GM10248 (cell line): ENCODE measurements at regions of chr6 and their contacts with region 1.

Region 1: GRCh38 chr6:116100419-116101301 is at the start of gene NT5DC1:
- DNase-seq: peak; percentile 93
- CTCF ChIP-seq: peak; percentile 19

Region 2: GRCh38 chr6:115982453-115982852 is 118.2 kb before region 1 on chr6:
- CTCF ChIA-PET with region 1: no interaction called
- POLR2A ChIA-PET with region 1: no interaction called
- DNase-seq: no peak
- CTCF ChIP-seq: no peak

Region 3: DNA sequence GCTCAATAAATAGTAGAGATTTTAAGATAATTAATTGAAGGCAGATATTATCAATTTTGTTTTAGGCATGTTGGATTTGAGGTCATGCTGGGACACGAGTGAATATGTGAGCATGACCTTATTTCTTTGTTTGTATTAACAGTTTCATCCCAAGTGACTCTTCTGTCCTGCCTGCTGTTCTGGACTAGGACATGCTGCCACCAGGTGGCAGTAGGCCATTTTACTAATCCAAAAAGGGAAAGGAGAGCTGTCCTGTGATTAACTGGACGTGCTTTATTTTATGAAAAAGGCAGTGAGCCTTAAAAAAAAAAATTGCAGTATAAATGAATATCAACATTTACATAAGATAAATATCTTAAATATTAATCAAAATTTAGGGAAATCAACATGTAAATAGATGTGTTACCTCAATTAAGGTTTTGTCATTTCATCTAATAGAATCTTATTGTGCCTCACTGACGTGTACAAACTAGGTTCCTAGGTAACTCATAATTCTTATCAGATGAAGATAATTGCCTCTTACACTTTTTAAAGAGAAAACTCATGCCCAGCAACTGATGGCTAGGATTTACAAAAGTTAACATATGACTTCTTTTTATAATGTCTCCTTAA is 89.8 kb before region 1 on chr6:
- CTCF ChIA-PET with region 1: interaction called, 28 read pairs
- POLR2A ChIA-PET with region 1: interaction called, 3 read pairs
- DNase-seq: peak; percentile 15
- CTCF ChIP-seq: peak; percentile 80

Region 4: DNA sequence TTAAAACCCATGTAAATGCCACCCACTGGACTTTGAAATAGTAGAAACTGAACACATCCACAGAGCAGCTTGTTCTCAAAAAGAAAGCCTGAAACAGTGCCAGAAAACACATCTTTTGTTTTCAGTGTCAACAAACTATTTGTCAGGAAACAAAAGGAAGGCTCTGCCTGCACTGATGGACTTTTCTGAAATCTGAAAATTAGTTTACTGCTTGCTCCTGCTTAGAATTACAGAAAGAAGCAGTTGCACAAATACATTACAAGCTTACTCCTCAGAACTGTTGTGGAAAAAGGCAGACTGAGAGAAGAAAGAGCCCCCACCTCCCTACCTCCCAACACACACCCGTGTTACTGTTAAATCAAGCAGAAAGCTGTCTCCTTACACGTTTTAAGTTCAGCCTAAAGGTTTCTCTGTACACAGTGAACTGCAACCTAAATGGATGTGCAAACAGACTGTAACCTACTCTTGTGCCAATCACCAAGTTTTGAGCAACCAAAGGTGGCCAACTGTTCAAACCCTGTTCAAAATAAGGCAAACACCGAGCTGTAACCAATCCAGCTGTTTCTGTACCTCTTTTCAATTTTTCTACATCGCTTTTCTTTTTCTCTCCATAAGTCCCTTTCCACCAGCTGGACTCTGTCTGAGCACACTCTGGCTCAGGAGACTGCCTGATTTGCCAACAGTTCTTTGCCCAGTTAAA is 83.7 kb before region 1 on chr6:
- CTCF ChIA-PET with region 1: interaction called, 28 read pairs
- POLR2A ChIA-PET with region 1: no interaction called
- DNase-seq: no peak
- CTCF ChIP-seq: no peak

Region 5: DNA sequence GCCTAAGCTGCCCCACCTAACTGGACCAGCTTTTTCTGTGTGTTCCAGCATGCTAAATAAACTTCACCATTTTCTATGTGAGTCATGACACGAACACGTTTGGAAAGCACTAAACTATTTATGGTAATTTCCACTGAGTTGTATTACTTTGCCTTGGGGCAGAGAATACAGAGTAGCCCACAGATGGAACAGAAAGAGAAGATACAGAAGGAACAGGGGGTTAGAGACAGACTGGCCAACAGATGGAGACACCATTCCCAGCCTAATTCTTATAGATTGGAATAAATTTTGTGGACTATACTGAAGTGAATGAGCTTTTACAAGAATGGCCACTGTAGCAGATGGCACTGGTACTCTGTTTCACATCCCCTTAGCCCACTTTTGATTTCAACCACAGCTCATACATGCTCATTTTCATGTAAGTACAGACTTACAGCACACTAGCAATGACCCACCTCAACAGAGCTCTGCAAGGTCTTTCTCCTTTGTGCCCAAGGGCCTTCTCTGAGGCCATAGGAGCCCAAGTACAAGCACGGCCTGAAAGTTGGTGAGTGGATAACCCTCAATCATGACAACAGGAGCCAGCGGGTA is 13.1 kb before region 1 on chr6:
- CTCF ChIA-PET with region 1: interaction called, 50 read pairs
- POLR2A ChIA-PET with region 1: no interaction called
- DNase-seq: peak; percentile 32
- CTCF ChIP-seq: no peak

Region 6: DNA sequence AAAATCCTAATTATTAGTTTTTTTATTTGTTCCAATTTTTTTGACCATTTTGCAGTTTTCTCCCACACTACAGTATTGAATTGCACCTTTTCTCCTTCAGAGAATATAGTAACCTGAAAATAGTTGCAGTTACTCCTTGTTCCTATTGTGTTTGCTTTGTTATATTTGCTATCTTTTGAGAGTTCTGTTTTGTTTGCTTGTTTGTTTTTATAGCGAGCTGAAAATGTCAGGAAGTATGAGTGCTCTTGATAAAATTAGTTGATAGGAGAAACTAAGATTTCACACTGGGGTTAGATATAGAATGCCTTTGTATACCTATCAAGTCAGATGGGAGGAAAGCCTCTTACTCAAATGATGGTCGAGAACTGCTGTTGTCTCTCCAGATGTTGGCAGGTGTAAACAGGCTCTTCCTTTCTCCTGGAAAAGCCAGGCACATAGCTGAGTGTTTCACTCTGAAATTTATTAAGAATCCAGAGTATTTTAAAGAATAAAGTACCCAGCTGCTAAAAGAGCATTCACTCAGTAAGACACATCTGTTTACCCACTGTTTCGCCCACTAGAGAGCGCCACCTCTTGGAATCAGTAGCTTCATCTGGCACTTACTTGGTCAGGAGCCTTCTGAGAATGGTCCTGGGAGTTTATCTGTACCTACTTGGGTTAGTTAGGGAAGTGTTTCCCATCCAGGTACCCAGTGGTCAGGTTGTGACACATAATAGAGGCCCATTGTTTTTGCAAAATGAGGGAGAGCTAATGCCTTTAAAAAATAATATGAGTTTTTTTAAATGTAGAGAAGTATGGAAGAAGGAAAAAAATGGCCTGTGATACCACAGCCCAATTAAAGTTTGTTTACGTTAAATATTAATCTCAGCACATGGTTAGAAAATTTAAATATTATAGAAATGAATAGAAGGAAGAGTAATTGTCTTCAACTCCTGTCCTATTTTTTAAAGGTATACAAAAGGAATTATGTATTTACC is 11.2 kb after region 1 on chr6:
- CTCF ChIA-PET with region 1: interaction called, 59 read pairs
- POLR2A ChIA-PET with region 1: no interaction called
- DNase-seq: no peak
- CTCF ChIP-seq: peak; percentile 53